Esophagus muscularis mucosa (tissue), 4 donors: ENCODE measurements at regions of chr19 and their contacts with region 1.

Region 1: GRCh38 chr19:32971715-32972540 is at the starts of genes CEP89 and FAAP24:
- DNase-seq: peak; percentile 100
- H3K4me3 ChIP-seq: peak within 1 kb of the TSS; percentile 64 to 89 (median 79)
- H3K27ac ChIP-seq: peak within 1 kb of the TSS; percentile 66 to 80 (median 76)
- H3K4me1 ChIP-seq: peaks cover 13 to 38% (median 31%) of the 10 kb centered on the region in 4 donors
- H3K27me3 ChIP-seq: no peaks in the 10 kb centered on the region
- CTCF ChIP-seq: peak in 1 of 3 experiments; percentile 20
- EP300 ChIP-seq: no peak
- POLR2A ChIP-seq: no peak
- total RNA-seq, gene CEP89: 9.1 to 20.4 (median 18.4) TPM
- total RNA-seq, gene FAAP24: 0.39 to 1.2 (median 0.68) TPM

Region 2: GRCh38 chr19:32702075-32702474 is 269.9 kb before region 1 on chr19:
- intact Hi-C with region 1: no loop called
- DNase-seq: no peak
- H3K4me3 ChIP-seq: no peak overlapping the region
- H3K27ac ChIP-seq: no peak overlapping the region
- H3K4me1 ChIP-seq: peaks cover 0 to 10% (median 8%) of the 10 kb centered on the region in 4 donors
- H3K27me3 ChIP-seq: no peaks in the 10 kb centered on the region
- CTCF ChIP-seq: no peak
- EP300 ChIP-seq: no peak
- POLR2A ChIP-seq: no peak

Region 3: GRCh38 chr19:32945277-32945676 is 26.7 kb before region 1 on chr19:
- intact Hi-C with region 1: no loop called
- DNase-seq: no peak
- H3K4me3 ChIP-seq: no peak overlapping the region
- H3K27ac ChIP-seq: no peak overlapping the region
- H3K4me1 ChIP-seq: no peaks in the 10 kb centered on the region
- H3K27me3 ChIP-seq: no peaks in the 10 kb centered on the region
- CTCF ChIP-seq: no peak
- EP300 ChIP-seq: no peak
- POLR2A ChIP-seq: no peak

Region 4: GRCh38 chr19:33080761-33081681 is 109.1 kb after region 1 on chr19 and contains the start of gene GPATCH1:
- intact Hi-C with region 1: loop called (anchors 2 kb)
- DNase-seq: peak; percentile 96
- H3K4me3 ChIP-seq: peak within 1 kb of the TSS; percentile 75 to 96 (median 80)
- H3K27ac ChIP-seq: peak within 1 kb of the TSS; percentile 73 to 85 (median 79)
- H3K4me1 ChIP-seq: peaks cover 10 to 25% (median 19%) of the 10 kb centered on the region in 4 donors
- H3K27me3 ChIP-seq: peaks cover 0 to 2% (median 0%) of the 10 kb centered on the region in 4 donors
- CTCF ChIP-seq: peak in 1 of 3 experiments; percentile 17
- EP300 ChIP-seq: no peak
- POLR2A ChIP-seq: no peak
- total RNA-seq, gene GPATCH1: 5.4 to 8.9 (median 7.3) TPM